ENCODE measurements at regions of chr6 and their contacts with region 1.

Region 1: DNA sequence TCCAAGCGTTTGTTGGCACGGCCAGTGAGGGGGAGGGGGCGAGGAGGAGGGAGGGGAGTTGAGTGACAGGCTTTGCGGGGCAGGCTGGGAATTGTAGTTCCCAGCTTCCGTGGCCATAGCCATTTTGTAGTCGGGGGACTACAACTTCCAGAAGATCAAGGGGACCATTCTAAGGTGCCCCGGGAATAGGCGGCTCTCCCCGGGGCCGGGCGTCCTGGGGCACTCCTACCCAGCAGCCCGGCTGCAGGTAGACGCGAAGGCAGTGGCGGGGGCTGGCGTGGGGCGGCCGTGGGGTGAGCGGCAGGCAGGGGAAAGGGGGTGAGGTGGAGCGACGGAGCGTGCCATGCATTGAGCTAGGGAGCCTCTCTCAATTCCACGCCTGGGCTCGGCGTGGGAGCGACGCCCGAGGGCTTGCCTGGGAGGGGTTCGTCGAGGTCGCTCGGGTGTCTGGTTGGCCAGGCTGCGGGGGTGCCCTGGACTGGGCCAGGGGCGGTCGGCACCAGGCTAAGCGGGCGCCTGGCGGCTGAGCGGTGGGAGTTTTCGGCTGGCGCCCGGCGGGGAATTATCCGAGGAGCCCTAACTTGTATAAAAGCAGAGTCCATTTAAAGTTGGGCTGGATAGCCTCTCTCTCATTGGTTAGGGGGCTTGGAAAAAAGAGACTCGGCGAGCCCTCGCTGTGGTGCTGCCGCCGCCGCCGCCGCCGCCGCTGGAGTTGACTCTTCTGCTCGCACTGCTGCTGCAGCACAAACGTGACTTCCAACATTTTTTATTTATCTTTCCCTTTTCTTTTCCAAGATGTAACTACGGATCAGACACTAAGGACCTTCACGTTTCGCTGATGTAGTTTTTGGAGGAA is at the start of gene JARID2:
- DNase-seq: peak; percentile 94 to 97
- H3K4me3 ChIP-seq: peak within 1 kb of the TSS; percentile 93
- H3K27ac ChIP-seq: peak within 1 kb of the TSS; percentile 73
- H3K4me1 ChIP-seq: peaks cover 35% of the 10 kb centered on the region
- H3K27me3 ChIP-seq: no peaks in the 10 kb centered on the region
- CTCF ChIP-seq: no peak
- total RNA-seq, gene JARID2: 31.1 and 35.0 TPM in 2 replicates

Region 2: DNA sequence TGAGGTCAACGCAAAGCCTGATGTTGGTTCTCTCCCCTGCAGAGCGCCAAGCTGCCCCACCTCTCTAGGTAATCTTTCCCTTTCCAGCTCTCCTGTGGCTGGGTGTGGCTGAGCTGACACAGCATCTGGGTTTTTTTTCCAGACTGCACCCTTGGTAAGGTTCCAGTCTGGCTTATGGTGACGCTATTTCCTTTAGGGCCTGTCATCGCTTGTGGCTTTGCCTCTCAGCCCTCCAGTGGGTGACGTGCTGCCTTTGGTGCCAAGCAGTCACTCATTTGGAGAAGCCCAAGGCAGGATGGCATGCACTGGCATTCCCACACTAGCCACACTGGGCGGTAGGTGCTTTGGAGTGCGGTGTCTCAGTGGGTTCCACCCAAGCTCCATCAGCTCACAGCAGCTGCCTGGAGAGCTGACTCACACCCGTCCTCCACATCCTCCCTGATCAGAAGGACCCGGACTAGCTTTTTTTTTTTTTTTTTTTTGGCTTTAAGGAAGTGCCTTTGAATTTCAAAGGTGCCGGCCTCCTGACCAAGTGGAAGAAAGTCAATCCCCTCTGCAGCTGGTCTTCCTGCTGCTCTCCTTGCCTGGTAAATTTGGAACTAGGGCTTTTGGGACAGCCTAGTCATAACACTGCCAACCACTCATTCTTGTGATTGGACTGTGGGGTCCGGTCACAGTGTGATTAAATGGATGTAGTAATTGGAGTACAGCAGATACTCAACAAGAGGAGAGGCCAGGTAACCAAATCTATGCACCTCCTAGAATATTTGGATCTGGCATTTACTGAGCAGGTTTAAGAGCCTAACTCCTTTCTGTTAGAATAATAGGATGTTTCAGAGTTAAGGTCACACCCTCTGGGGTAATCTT is 974.4 kb before region 1 on chr6:
- CTCF ChIA-PET with region 1: no interaction called
- POLR2A ChIA-PET with region 1: no interaction called
- intact Hi-C with region 1: loop called (anchors 2 kb)
- DNase-seq: peak; percentile 98
- H3K4me3 ChIP-seq: no peak overlapping the region
- H3K27ac ChIP-seq: peak overlapping the region; percentile 92
- H3K4me1 ChIP-seq: peaks cover 20% of the 10 kb centered on the region
- H3K27me3 ChIP-seq: no peaks in the 10 kb centered on the region
- CTCF ChIP-seq: no peak; the same call in 1 of the 2 replicates

Region 3: GRCh38 chr6:14734416-14735340 is 510.9 kb before region 1 on chr6:
- CTCF ChIA-PET with region 1: no interaction called
- POLR2A ChIA-PET with region 1: interaction called, 3 read pairs
- intact Hi-C with region 1: loop called (anchors 2 kb)
- DNase-seq: peak in 1 of 2 experiments; percentile 37
- H3K4me3 ChIP-seq: no peak overlapping the region; the same call in 1 of the 2 replicates
- H3K27ac ChIP-seq: peak overlapping the region; percentile 99
- H3K4me1 ChIP-seq: peaks cover 53% of the 10 kb centered on the region
- H3K27me3 ChIP-seq: no peaks in the 10 kb centered on the region
- CTCF ChIP-seq: no peak

Region 4: DNA sequence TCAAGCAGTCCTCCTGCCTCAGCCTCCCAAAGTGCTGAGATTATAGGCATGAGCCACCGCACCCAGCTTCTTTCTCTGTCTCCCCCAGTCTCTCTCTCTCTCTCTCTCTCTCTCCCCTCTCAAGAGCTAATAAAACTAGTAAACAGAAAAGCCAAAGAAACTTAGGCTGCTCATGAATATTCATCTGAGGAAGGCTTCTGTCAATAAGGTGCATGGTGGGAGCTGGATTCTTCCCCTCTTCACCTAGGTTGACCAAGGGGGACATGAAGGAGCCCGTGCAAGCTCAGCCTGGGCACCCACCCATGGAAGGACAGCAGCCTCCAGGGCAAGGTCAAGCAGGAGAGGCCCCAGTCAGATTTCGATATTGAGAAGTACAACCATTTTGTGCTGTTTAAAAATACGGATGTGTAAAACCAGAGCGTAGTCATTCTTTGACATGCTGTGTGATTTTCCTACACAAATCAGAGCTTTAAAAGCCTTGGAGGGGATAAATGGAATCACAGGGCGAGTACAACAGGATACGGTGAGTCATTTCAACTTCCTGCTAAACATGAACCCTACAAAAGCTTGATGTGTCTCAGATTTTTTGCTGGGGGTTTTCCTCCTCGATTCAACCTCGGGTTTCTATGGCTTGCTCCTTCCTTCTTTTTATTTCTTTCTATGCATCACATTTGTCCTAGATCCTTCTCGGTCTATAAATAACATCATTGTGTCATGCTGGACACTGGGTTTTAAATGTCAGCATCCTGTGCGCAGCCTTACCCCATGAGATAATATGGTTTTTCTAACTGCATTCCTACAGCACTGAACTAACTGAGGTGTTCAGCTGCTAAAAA is 368.6 kb before region 1 on chr6:
- CTCF ChIA-PET with region 1: no interaction called
- POLR2A ChIA-PET with region 1: interaction called, 3 read pairs
- intact Hi-C with region 1: loop called (anchors 5 kb)
- DNase-seq: peak; percentile 30 to 73
- H3K4me3 ChIP-seq: no peak overlapping the region
- H3K27ac ChIP-seq: peak overlapping the region; percentile 78
- H3K4me1 ChIP-seq: peaks cover 28% of the 10 kb centered on the region
- H3K27me3 ChIP-seq: no peaks in the 10 kb centered on the region
- CTCF ChIP-seq: no peak

Region 5: DNA sequence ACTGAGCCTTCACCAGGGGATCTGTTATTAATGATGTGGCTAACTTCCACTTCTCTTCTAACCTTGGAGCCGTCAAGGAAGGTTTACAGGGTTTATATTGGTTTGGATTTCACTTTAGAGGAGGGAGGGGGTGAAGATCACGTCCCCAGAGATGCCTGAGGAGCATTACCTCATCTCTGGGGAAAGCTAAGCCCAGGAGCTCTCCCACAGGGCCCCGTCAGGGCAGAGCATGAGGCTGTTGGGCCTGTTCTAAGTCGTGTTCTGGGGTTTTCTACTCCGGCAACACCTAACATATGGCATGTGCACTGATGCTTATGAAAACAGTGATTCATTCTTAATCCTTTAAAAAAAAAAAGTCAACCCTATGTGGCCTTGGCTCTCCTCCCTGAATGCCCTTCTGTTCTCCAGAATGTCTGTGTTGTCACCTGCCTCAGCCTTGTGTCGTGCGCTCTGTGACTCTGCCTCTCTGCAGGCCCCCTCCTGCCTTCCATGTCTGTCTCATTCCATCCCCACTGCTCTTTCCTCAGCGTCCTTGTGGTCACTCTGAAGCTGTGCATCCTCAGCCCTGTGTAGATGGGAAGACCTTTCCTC is 97.1 kb before region 1 on chr6:
- CTCF ChIA-PET with region 1: no interaction called
- POLR2A ChIA-PET with region 1: no interaction called
- intact Hi-C with region 1: loop called (anchors 2 kb)
- DNase-seq: peak; percentile 70 to 93
- H3K4me3 ChIP-seq: no peak overlapping the region
- H3K27ac ChIP-seq: peak overlapping the region; percentile 56
- H3K4me1 ChIP-seq: peaks cover 15% of the 10 kb centered on the region
- H3K27me3 ChIP-seq: no peaks in the 10 kb centered on the region
- CTCF ChIP-seq: no peak; the same call in 1 of the 2 replicates

Region 6: GRCh38 chr6:15441215-15441868 is 195.8 kb after region 1 on chr6:
- CTCF ChIA-PET with region 1: no interaction called
- POLR2A ChIA-PET with region 1: no interaction called
- intact Hi-C with region 1: loop called (anchors 2 kb)
- DNase-seq: peak; percentile 58 to 69
- H3K4me3 ChIP-seq: no peak overlapping the region
- H3K27ac ChIP-seq: no peak overlapping the region
- H3K4me1 ChIP-seq: peaks cover 46% of the 10 kb centered on the region
- H3K27me3 ChIP-seq: no peaks in the 10 kb centered on the region
- CTCF ChIP-seq: peak; percentile 81

Measured in PC-9 (cell line).